CD8-positive, alpha-beta memory T cell (primary cell): ENCODE measurements at regions of chr2 and their contacts with region 1.

Region 1: GRCh38 chr2:27095745-27096651 is 9.4 kb downstream of the KHK start:
- DNase-seq: no peak
- H3K4me3 ChIP-seq: no peak overlapping the region
- H3K4me3 Mint-ChIP-seq: peak overlapping the region in 6 of 7 donors; percentile 8 to 76 (median 42)
- H3K27ac ChIP-seq: no peak overlapping the region
- H3K27ac Mint-ChIP-seq: peak overlapping the region in 1 of 8 donors; percentile 32
- H3K4me1 ChIP-seq: peaks cover 8% of the 10 kb centered on the region
- H3K4me1 Mint-ChIP-seq: peaks cover 12 to 15% (median 13%) of the 10 kb centered on the region in 3 donors
- H3K27me3 ChIP-seq: no peaks in the 10 kb centered on the region
- H3K27me3 Mint-ChIP-seq: no peaks in the 10 kb centered on the region

Region 2: GRCh38 chr2:27057184-27057583 is 38.8 kb before region 1 on chr2:
- CTCF ChIA-PET with region 1: no interaction called
- POLR2A ChIA-PET with region 1: no interaction called
- DNase-seq: no peak
- H3K4me3 ChIP-seq: no peak overlapping the region
- H3K4me3 Mint-ChIP-seq: no peak overlapping the region
- H3K27ac ChIP-seq: no peak overlapping the region
- H3K27ac Mint-ChIP-seq: no peak overlapping the region
- H3K4me1 ChIP-seq: peaks cover 4% of the 10 kb centered on the region
- H3K4me1 Mint-ChIP-seq: peaks cover 3 to 9% (median 4%) of the 10 kb centered on the region in 3 donors
- H3K27me3 ChIP-seq: no peaks in the 10 kb centered on the region
- H3K27me3 Mint-ChIP-seq: peaks cover 0 to 2% of the 10 kb centered on the region in 2 donors

Region 3: DNA sequence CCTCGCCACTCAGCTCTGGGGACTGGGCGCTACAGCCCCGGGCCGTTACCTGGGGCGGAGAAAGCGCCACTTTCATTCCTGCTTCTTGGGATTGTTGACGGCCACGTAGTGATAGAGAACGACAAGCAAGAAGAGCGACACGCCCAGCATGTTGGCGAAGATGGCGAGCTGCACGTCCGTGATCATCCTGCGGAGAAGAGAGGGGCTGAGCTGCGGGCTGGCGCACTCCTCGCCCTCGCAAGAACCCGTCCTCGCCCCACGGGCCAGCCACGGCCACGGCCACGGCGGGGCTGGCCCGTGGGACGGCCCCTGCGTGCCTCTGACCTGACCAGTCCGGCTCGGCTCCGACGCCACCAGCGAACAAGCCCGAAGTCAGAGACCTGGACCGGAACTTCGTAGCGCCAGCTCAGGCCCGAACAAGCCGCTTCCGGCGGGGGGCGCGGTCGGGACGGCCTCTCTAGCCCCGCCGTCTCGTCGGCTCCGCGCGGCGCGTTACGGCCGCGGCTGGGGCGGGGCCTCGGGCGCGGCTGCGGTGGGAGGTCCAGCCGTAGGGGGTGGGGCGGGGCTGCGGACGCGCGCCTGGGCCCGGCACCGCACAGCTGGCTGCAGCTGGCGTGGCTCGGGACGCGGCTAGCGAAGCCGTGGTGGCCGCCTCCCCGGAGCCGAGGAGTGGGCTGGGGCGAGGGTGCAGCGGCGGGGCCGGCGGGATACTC is 24.6 kb before region 1 on chr2 and contains the start of gene OST4:
- CTCF ChIA-PET with region 1: no interaction called
- POLR2A ChIA-PET with region 1: no interaction called
- DNase-seq: peak; percentile 85 to 89 (median 88)
- H3K4me3 ChIP-seq: peak within 1 kb of the TSS; percentile 82
- H3K4me3 Mint-ChIP-seq: peak within 1 kb of the TSS; percentile 91 to 98 (median 97)
- H3K27ac ChIP-seq: peak within 1 kb of the TSS; percentile 96
- H3K27ac Mint-ChIP-seq: peak within 1 kb of the TSS; percentile 88 to 99 (median 98)
- H3K4me1 ChIP-seq: peaks cover 44% of the 10 kb centered on the region
- H3K4me1 Mint-ChIP-seq: peaks cover 58 to 82% (median 75%) of the 10 kb centered on the region in 3 donors
- H3K27me3 ChIP-seq: no peaks in the 10 kb centered on the region
- H3K27me3 Mint-ChIP-seq: no peaks in the 10 kb centered on the region
- total RNA-seq, gene OST4: 346 to 353 TPM

Region 4: GRCh38 chr2:28224648-28225472 is 1128.9 kb after region 1 on chr2:
- CTCF ChIA-PET with region 1: no interaction called
- POLR2A ChIA-PET with region 1: interaction called, 14 read pairs
- DNase-seq: no peak
- H3K4me3 ChIP-seq: no peak overlapping the region
- H3K4me3 Mint-ChIP-seq: no peak overlapping the region
- H3K27ac ChIP-seq: no peak overlapping the region
- H3K27ac Mint-ChIP-seq: peak overlapping the region in 2 of 8 donors; percentile 55 to 66
- H3K4me1 ChIP-seq: no peaks in the 10 kb centered on the region
- H3K4me1 Mint-ChIP-seq: peaks cover 4 to 6% (median 5%) of the 10 kb centered on the region in 3 donors
- H3K27me3 ChIP-seq: no peaks in the 10 kb centered on the region
- H3K27me3 Mint-ChIP-seq: no peaks in the 10 kb centered on the region